Aorta (tissue), 5 donors: ENCODE measurements at regions of chr5 and their contacts with region 1.

Region 1: GRCh38 chr5:98905857-98906690 is 22.7 kb downstream of the CHD1 start:
- DNase-seq: no peak
- ATAC-seq: peak; percentile 78
- H3K4me3 ChIP-seq: no peak overlapping the region
- H3K27ac ChIP-seq: no peak overlapping the region
- H3K4me1 ChIP-seq: no peaks in the 10 kb centered on the region
- H3K27me3 ChIP-seq: no peaks in the 10 kb centered on the region

Region 2: GRCh38 chr5:98997000-98997399 is 90.9 kb after region 1 on chr5:
- intact Hi-C with region 1: no loop called
- DNase-seq: no peak
- ATAC-seq: no peak
- H3K4me3 ChIP-seq: no peak overlapping the region
- H3K27ac ChIP-seq: no peak overlapping the region
- H3K4me1 ChIP-seq: no peaks in the 10 kb centered on the region
- H3K27me3 ChIP-seq: no peaks in the 10 kb centered on the region

Region 3: DNA sequence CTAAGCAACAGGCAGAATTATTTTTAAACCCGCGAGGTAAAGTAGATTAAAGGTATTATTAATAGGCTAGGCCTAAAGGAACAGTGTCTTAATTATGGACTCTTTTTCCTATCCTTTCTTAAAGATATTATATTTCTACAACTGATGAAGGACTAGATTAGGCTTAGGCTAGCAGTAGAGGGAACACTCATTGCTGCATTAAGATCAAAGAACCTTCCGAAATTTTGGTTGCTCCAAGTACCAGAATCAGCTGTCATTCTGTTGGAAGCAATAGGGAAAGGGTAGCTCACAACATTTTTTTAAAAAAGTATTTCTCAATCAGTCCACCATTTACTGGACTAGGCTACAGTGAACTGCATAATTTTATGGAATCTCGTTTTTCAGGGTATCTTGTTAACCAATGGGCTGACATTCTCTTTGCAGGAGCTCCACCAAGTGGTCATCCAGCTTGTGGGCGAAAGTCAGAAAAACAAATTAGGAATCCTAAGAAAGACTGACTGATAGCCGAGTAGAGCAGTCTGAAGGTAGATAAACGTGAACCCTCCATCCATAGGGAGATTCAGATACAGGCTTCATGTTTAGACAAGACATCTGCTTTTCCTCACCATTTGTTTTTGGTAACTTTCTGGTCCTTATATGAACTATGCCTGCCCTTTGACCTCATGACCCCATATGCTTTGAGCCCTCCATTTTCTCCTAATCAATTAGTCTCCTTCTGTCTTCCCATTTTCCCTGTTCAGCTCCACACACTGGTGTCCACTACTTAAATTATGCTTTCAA is 126.3 kb after region 1 on chr5:
- intact Hi-C with region 1: loop called (anchors 2 kb)
- DNase-seq: peak in 1 of 2 donors; percentile 55
- ATAC-seq: peak; percentile 89
- H3K4me3 ChIP-seq: no peak overlapping the region
- H3K27ac ChIP-seq: no peak overlapping the region
- H3K4me1 ChIP-seq: peaks cover 0 to 2% of the 10 kb centered on the region in 2 donors
- H3K27me3 ChIP-seq: no peaks in the 10 kb centered on the region

Region 4: DNA sequence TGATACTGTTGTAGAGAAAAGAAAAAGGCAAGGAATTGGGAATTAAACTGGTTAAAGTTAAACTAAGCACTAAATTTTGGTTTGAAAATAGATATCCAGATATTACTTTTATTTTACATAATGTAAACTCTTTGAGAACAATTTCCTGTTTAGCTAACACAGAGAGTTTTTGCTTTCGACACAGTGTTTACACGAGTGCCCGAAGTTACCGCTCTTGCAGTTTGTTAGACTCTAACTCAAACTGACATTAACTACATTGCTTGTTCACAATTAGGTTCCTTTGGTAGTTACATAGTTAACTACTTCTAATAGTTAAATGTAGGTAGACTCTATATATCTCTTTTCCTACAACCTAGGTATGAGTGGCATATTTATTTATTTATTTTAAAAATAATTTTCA is 139.8 kb after region 1 on chr5:
- intact Hi-C with region 1: no loop called
- DNase-seq: no peak
- ATAC-seq: no peak
- H3K4me3 ChIP-seq: no peak overlapping the region
- H3K27ac ChIP-seq: no peak overlapping the region
- H3K4me1 ChIP-seq: no peaks in the 10 kb centered on the region
- H3K27me3 ChIP-seq: no peaks in the 10 kb centered on the region